Thyroid gland (tissue), 4 donors: ENCODE measurements at regions of chr20 and their contacts with region 1.

Region 1: DNA sequence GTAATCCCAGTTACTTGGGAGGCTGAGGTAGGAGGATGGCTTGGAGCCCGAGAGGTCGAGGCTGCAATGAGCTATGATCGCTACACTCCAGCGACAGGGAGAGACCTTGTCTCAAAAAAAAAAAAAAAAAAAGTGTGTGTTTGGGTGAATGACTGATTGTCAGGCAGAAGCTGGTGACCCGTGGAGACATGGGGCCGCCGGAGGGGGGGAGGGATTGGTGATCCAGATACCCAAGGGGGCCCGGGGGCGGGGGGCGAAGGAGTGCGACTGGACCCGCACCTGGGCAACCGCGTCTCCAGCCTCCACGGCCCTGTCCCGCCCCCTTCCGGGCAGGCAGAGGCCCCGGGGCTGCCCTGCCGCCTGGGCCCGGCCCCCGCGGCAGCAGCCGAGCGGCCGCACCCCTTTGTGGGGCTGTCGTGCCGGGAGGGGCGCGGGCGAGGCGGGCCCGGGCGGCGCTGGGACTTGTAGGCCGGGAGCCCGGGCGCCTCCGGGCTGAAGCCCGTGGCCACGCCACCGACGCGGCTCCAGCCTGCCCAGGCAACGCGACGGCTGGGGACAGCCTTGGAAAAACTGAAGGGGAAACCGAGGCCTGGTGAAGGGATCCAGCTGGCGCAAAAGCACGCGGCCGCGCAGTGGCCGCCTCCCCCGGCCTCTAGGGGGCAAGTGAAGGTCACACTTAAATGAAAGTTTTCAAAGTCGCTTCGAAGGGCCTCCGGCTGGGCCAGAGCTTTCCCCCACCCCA is 2.1 kb upstream of the RBM38 start:
- DNase-seq: peak; percentile 84 to 86
- H3K4me3 ChIP-seq: peak overlapping the region in 2 of 3 donors; percentile 12 to 29
- H3K27ac ChIP-seq: peak overlapping the region; percentile 56 to 79 (median 59)
- H3K4me1 ChIP-seq: peaks cover 5 to 30% of the 10 kb centered on the region in 2 donors
- H3K27me3 ChIP-seq: no peaks in the 10 kb centered on the region
- CTCF ChIP-seq: peak in 3 of 6 experiments; percentile 12 to 26 (median 21)
- POLR2A ChIP-seq: peak in 1 of 2 donors; percentile 51

Region 2: GRCh38 chr20:57596998-57597939 is 208.1 kb after region 1 on chr20:
- intact Hi-C with region 1: loop called (anchors 10 kb)
- DNase-seq: peak; percentile 63 to 68
- H3K4me3 ChIP-seq: no peak overlapping the region
- H3K27ac ChIP-seq: no peak overlapping the region
- H3K4me1 ChIP-seq: peaks cover 2 to 7% of the 10 kb centered on the region in 2 donors
- H3K27me3 ChIP-seq: no peaks in the 10 kb centered on the region
- CTCF ChIP-seq: peak; percentile 68 to 97 (median 88)
- POLR2A ChIP-seq: no peak

Region 3: DNA sequence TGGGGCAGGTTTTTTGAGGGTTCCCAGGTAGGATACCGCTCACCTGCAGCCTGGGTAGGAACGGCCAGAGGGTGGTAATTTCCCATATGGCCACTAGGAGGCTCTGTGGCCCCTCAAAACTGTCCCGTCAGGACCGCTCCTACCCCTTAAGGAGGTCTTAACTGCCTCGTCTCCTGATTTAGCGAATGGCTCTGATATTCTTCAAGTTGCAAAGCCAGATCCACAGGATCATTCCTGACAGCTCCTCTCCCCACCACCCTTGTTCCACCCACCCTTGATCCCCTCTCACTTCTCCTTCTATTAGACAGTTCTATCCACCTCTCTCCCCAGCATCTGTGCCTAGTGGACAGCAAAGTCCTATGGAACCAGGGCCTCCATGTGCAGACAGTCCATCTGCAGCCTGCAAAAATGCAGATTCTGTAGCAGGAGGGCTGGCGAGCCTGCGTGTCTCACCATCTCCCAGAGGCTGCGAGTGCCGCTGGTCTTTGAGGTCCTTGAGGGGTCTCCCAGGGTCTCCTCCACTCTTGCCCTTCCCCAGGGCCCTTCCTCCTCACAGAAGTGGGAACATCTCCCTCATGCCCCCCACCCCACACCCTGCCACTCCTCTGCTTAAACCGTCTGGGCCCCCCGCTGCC is 265.4 kb after region 1 on chr20:
- intact Hi-C with region 1: no loop called
- DNase-seq: peak; percentile 52 to 55
- H3K4me3 ChIP-seq: no peak overlapping the region
- H3K27ac ChIP-seq: no peak overlapping the region
- H3K4me1 ChIP-seq: no peaks in the 10 kb centered on the region
- H3K27me3 ChIP-seq: no peaks in the 10 kb centered on the region
- CTCF ChIP-seq: peak; percentile 77 to 93 (median 88)
- POLR2A ChIP-seq: no peak

Region 4: DNA sequence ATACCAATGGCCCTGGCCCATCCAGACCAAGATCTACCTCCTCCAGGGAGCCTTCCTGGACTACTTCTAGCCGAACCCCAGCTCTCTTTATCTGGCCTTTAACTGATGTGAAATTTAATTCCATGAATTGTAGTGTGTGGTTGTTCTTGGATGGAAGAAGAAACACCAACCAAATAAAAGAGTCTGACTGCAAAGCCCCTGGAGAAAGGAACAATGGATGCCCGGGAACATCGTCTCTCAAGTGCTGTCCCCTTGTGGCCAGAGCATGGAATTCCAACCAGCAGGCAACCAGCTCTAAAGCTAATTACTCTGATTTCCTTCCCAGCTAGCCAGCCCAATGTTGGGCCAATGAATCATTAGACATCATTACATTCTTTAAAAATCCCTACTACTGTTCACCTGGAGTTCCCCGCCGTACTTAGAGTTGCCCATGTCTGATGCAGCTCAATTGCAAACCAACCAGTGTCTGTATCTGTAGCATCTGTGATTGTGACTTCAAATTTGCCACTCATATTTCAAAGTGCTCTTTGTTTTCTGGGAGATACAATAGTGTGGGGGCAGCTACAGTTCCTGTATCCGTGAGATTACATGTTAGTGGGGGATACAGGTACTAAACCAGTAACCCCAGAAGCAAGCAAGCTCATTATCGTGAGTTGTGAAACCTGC is 698.2 kb after region 1 on chr20:
- intact Hi-C with region 1: no loop called
- DNase-seq: peak; percentile 5 to 10
- H3K4me3 ChIP-seq: no peak overlapping the region
- H3K27ac ChIP-seq: no peak overlapping the region
- H3K4me1 ChIP-seq: no peaks in the 10 kb centered on the region
- H3K27me3 ChIP-seq: no peaks in the 10 kb centered on the region
- CTCF ChIP-seq: peak; percentile 30 to 70 (median 44)
- POLR2A ChIP-seq: no peak

Region 5: GRCh38 chr20:58209652-58210397 is 820.7 kb after region 1 on chr20:
- intact Hi-C with region 1: loop called (anchors 10 kb)
- DNase-seq: peak; percentile 78 to 82
- H3K4me3 ChIP-seq: no peak overlapping the region
- H3K27ac ChIP-seq: no peak overlapping the region
- H3K4me1 ChIP-seq: no peaks in the 10 kb centered on the region
- H3K27me3 ChIP-seq: no peaks in the 10 kb centered on the region
- CTCF ChIP-seq: peak; percentile 98 to 100 (median 100)
- POLR2A ChIP-seq: no peak

Region 6: GRCh38 chr20:59222253-59223181 is 1833.4 kb after region 1 on chr20:
- intact Hi-C with region 1: loop called (anchors 10 kb)
- DNase-seq: peak; percentile 80 to 82
- H3K4me3 ChIP-seq: peak overlapping the region in 1 of 3 donors; percentile 40
- H3K27ac ChIP-seq: peak overlapping the region; percentile 4 to 84 (median 37)
- H3K4me1 ChIP-seq: peaks cover 24 to 26% of the 10 kb centered on the region in 2 donors
- H3K27me3 ChIP-seq: no peaks in the 10 kb centered on the region
- CTCF ChIP-seq: peak; percentile 73 to 96 (median 90)
- POLR2A ChIP-seq: no peak